Panc1 (cell line): ENCODE measurements at regions of chr14 and their contacts with region 1.

Region 1: DNA sequence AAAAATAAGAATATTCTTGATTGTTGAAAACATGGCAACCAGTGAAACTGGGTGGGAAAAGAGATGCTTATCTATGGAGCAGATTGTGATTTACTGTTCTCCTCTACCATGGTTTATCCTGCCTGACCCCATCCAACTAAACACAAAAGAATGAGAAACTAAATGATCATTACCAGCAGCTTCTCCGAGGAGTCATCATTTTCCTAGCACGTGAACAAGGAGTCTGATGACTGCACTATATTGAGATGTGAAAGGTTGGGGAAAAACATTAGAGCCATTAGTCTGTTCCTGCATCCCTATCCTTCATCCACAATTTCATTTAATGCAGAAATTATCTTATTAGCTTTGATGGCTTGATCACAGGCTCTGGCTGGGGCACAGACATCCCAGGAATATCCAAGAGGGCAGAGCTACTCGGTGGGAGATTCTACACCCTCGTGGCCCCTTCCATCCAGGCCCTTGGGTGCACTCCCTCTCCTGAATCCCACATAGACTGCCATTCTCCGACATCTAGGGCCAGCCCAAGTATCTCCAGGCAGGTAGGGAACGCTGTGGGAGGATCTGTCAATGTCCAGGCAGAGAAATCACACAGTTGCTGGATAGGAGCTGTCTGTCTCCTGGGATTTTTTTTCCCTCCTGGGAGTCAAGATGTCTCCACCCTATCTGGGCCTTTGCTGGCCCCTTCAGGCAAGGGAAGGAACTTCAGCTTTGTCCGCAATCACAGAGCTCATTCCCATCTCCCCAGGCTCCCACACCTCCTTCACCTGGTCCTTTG is 43.3 kb upstream of the DHRS4 start:
- DNase-seq: peak; percentile 27
- ATAC-seq: peak; percentile 91
- H3K4me3 ChIP-seq: no peak overlapping the region
- H3K27ac ChIP-seq: no peak overlapping the region
- H3K4me1 ChIP-seq: no peaks in the 10 kb centered on the region
- H3K27me3 ChIP-seq: no peaks in the 10 kb centered on the region
- CTCF ChIP-seq: peak; percentile 82

Region 2: GRCh38 chr14:22888662-22889061 is 1021.6 kb before region 1 on chr14:
- CTCF ChIA-PET with region 1: no interaction called
- POLR2A ChIA-PET with region 1: interaction called, 14 read pairs
- in situ Hi-C with region 1: no loop called
- intact Hi-C with region 1: no loop called
- DNase-seq: no peak
- ATAC-seq: no peak
- H3K4me3 ChIP-seq: no peak overlapping the region
- H3K27ac ChIP-seq: no peak overlapping the region
- H3K4me1 ChIP-seq: peaks cover 5% of the 10 kb centered on the region; the same call in 1 of the 2 replicates
- H3K27me3 ChIP-seq: no peaks in the 10 kb centered on the region
- CTCF ChIP-seq: no peak

Region 3: GRCh38 chr14:23588884-23589598 is 321.2 kb before region 1 on chr14:
- CTCF ChIA-PET with region 1: interaction called, 10 read pairs
- POLR2A ChIA-PET with region 1: no interaction called
- in situ Hi-C with region 1: no loop called
- intact Hi-C with region 1: no loop called
- DNase-seq: no peak
- ATAC-seq: peak; percentile 90
- H3K4me3 ChIP-seq: no peak overlapping the region
- H3K27ac ChIP-seq: no peak overlapping the region
- H3K4me1 ChIP-seq: no peaks in the 10 kb centered on the region
- H3K27me3 ChIP-seq: no peaks in the 10 kb centered on the region
- CTCF ChIP-seq: peak; percentile 79

Region 4: DNA sequence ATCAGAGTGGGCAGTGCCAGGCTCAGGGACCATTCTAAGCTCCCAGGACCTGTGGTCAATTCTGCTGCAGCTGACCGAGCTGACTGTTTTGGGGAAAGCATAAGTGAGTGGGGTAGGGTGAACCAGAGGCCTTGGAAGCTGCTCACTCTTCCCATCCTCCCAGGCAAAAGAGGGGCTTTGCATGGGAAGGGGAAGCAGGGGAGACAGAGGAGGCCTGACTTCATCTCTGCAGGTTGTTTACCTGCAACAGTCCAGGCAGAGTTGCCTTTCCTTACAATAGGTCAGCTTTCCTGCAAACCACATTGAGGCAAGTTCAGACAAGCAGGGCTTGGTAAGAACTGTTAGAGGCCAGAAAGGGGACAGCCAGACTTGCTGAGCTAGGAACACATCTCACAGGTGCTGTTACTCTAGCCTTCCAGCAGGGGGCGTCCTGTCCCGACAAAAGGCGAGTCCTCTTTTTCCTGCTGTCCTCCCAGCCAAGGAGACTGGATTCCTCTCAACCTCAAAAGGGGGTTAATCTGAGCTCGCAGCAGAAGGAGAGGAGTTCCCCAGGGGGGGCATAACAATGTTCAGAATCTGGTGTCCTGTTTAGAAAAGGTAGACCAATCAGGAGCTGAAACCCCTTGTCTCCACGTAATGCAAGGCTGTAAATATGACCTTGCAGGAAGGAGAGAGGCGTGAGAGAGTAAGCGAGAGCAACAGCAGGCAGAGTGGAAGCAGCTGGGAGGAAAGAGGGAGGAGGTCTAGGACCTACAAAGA is 278.4 kb before region 1 on chr14:
- CTCF ChIA-PET with region 1: interaction called, 17 read pairs
- POLR2A ChIA-PET with region 1: no interaction called
- in situ Hi-C with region 1: no loop called
- intact Hi-C with region 1: no loop called
- DNase-seq: peak; percentile 62
- ATAC-seq: peak; percentile 86
- H3K4me3 ChIP-seq: no peak overlapping the region
- H3K27ac ChIP-seq: no peak overlapping the region
- H3K4me1 ChIP-seq: peaks cover 3% of the 10 kb centered on the region
- H3K27me3 ChIP-seq: no peaks in the 10 kb centered on the region
- CTCF ChIP-seq: peak; percentile 89

Region 5: DNA sequence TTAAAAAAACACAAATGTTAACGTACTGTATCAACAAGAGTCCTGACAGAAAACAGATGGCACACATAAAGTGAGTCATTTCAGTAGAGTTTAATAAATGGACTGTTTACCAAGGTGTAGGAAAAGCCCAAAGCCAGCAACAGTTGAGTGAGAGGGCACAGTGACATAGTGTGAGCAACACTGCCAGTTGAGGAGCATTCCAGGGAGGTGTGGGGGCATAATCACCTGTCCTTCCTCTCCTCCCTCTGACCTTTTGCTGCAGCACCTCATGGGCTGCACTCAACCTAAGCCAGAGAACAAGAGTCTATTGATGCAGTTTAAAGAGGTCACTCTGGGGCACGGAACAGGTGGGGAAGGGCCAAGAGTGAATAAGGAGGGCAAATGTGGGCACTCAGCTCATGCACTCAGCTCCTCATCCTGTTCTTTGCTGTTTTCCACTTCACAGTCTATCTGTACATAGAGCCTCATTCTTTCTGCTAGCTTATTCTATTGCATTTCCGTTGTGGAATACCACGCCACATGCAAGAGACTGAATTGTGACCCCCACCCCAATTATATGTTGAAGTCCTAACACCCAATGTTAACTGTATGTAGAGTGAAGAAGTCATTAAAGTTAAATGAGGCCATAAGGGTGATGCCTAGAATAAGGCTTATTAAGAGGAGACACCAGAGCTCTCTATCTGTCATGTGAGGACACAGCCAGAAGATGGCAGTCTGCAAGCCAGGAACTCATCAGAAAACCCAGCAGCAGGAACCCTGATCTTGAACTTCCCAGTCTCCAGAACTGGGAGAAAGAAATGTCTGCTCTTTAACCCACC is 244.7 kb before region 1 on chr14:
- CTCF ChIA-PET with region 1: interaction called, 11 read pairs
- POLR2A ChIA-PET with region 1: no interaction called
- in situ Hi-C with region 1: no loop called
- intact Hi-C with region 1: loop called (anchors 10 kb)
- DNase-seq: peak; percentile 25
- ATAC-seq: peak; percentile 87; the same call in 1 of the 2 replicates
- H3K4me3 ChIP-seq: no peak overlapping the region
- H3K27ac ChIP-seq: no peak overlapping the region
- H3K4me1 ChIP-seq: no peaks in the 10 kb centered on the region
- H3K27me3 ChIP-seq: no peaks in the 10 kb centered on the region
- CTCF ChIP-seq: peak; percentile 77

Region 6: DNA sequence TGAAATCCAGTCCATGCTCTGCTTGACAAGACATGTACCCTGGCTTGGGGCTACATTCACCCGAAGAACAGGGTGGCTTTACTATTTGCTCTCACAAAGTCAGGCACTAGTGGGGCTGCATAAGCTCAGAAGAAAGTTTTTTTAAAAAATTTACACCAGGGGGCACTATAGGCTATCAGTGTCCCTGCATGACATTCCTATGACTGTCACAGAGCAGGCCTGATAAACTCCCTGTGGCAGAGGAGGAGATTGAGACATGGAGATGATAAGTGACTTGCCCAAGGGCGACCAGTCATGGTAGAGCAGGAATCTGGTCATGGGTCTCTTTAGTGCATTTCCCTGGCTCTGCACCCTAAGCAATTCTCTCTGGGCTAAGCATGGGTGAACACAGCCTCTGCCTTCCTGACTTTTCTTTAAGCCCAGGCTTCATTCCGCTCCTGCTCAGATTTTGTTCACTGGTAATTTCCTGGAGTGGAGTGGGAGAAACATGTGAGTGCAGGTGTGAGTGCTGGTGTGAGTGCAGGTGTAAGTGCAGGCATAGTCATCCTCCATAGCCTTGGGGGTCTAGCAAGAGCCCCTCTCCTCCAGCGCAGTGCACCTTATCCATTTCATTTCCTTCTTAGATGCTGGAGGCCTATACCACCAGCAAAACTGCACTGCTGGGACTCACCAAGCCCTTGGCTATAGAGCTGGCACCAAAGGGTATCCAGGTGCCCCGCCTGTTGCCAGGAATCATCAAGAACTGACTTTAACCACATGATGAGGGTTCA is 182.5 kb before region 1 on chr14:
- CTCF ChIA-PET with region 1: interaction called, 23 read pairs
- POLR2A ChIA-PET with region 1: no interaction called
- in situ Hi-C with region 1: no loop called
- intact Hi-C with region 1: loop called (anchors 2 kb)
- DNase-seq: no peak
- ATAC-seq: peak; percentile 96
- H3K4me3 ChIP-seq: no peak overlapping the region
- H3K27ac ChIP-seq: peak overlapping the region; percentile 29; the same call in 1 of the 2 replicates
- H3K4me1 ChIP-seq: peaks cover 3% of the 10 kb centered on the region; the same call in 1 of the 2 replicates
- H3K27me3 ChIP-seq: no peaks in the 10 kb centered on the region
- CTCF ChIP-seq: peak; percentile 65